PC-9 (cell line): ENCODE measurements at regions of chr16 and their contacts with region 1.

Region 1: DNA sequence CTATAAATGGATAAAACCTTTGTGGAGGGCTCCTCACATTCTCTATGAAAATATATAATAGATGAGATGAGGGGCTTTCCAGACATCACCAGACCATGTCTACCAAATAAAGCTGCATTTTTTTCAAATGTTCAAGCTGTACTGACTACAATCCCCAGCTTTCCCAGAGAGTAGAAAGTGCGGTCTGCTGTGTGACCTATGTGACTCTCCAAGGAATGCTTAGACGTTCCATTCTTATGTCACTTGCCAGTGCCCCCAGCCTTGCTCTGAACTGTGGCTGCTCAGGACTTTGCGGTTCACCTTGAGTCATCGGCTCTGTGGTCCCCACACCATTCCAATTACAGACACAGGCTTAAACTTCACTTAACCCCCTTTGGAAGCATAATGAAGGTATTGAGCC is 47.8 kb upstream of the SCNN1B start:
- DNase-seq: peak; percentile 83 to 93
- H3K4me3 ChIP-seq: no peak overlapping the region
- H3K27ac ChIP-seq: peak overlapping the region; percentile 63
- H3K4me1 ChIP-seq: peaks cover 56% of the 10 kb centered on the region
- H3K27me3 ChIP-seq: no peaks in the 10 kb centered on the region
- CTCF ChIP-seq: no peak

Region 2: GRCh38 chr16:23182460-23183309 is 71.7 kb before region 1 on chr16 and contains the start of gene SCNN1G:
- CTCF ChIA-PET with region 1: interaction called, 3 read pairs
- POLR2A ChIA-PET with region 1: no interaction called
- intact Hi-C with region 1: loop called (anchors 1 kb)
- DNase-seq: peak; percentile 75 to 99
- H3K4me3 ChIP-seq: peak within 1 kb of the TSS; percentile 81
- H3K27ac ChIP-seq: no peak within 1 kb of the TSS
- H3K4me1 ChIP-seq: peaks cover 27% of the 10 kb centered on the region
- H3K27me3 ChIP-seq: no peaks in the 10 kb centered on the region
- CTCF ChIP-seq: peak; percentile 85
- total RNA-seq, gene SCNN1G: not detected in 2 replicates

Region 3: DNA sequence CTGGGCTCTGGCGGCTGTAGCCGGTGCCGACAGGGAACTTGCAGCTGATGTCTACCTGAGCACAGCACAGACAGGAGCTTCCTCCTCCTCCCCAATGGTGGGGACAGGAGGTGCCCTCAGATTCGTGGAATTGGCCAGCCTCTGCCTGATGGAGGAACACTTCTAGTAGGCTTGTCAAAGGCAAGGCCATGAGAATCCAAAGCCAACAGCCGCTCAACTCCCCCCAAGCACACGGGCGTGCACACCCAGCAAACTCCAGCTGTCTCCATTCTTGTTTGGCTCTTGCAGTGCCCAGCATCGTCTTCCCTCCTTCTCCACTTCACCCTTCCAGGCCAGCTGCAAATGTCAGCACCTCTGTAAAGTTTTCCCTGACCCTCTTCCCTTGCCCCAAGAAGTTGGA is 36.7 kb before region 1 on chr16:
- CTCF ChIA-PET with region 1: no interaction called
- POLR2A ChIA-PET with region 1: no interaction called
- intact Hi-C with region 1: no loop called
- DNase-seq: no peak
- H3K4me3 ChIP-seq: no peak overlapping the region
- H3K27ac ChIP-seq: no peak overlapping the region
- H3K4me1 ChIP-seq: no peaks in the 10 kb centered on the region
- H3K27me3 ChIP-seq: no peaks in the 10 kb centered on the region
- CTCF ChIP-seq: no peak

Region 4: GRCh38 chr16:23229714-23230113 is 24.6 kb before region 1 on chr16:
- CTCF ChIA-PET with region 1: no interaction called
- POLR2A ChIA-PET with region 1: no interaction called
- intact Hi-C with region 1: loop called (anchors 2 kb)
- DNase-seq: peak; percentile 73 to 95
- H3K4me3 ChIP-seq: no peak overlapping the region
- H3K27ac ChIP-seq: peak overlapping the region; percentile 50
- H3K4me1 ChIP-seq: peaks cover 29% of the 10 kb centered on the region
- H3K27me3 ChIP-seq: no peaks in the 10 kb centered on the region
- CTCF ChIP-seq: no peak

Region 5: DNA sequence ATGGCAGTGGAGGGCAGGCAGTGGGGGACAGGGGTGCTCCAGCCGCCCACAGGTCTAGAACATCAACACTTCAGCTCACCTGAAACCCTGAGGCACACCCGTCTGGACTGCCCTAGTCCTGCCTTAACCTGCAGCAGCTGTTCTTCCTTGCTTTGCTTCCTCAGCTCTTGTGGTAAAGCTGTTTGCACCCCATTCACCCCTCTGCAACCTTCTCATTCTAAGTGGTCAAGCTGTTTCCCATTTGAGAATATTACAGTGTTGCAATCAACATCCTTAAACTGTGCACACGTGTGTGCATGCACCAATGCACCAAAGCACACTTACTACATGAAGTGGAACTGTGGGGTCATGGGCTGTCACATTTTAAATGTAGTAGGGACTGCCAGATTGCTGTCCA is 80.1 kb after region 1 on chr16:
- CTCF ChIA-PET with region 1: no interaction called
- POLR2A ChIA-PET with region 1: interaction called, 17 read pairs
- intact Hi-C with region 1: loop called (anchors 10 kb)
- DNase-seq: no peak
- H3K4me3 ChIP-seq: no peak overlapping the region
- H3K27ac ChIP-seq: peak overlapping the region; percentile 16; the same call in 1 of the 2 replicates
- H3K4me1 ChIP-seq: peaks cover 46% of the 10 kb centered on the region
- H3K27me3 ChIP-seq: no peaks in the 10 kb centered on the region
- CTCF ChIP-seq: no peak

Region 6: GRCh38 chr16:23362460-23363317 is 108.4 kb after region 1 on chr16:
- CTCF ChIA-PET with region 1: no interaction called
- POLR2A ChIA-PET with region 1: no interaction called
- intact Hi-C with region 1: loop called (anchors 5 kb)
- DNase-seq: peak; percentile 89 to 93
- H3K4me3 ChIP-seq: no peak overlapping the region
- H3K27ac ChIP-seq: peak overlapping the region; percentile 74
- H3K4me1 ChIP-seq: peaks cover 62% of the 10 kb centered on the region
- H3K27me3 ChIP-seq: no peaks in the 10 kb centered on the region
- CTCF ChIP-seq: no peak

Region 7: DNA sequence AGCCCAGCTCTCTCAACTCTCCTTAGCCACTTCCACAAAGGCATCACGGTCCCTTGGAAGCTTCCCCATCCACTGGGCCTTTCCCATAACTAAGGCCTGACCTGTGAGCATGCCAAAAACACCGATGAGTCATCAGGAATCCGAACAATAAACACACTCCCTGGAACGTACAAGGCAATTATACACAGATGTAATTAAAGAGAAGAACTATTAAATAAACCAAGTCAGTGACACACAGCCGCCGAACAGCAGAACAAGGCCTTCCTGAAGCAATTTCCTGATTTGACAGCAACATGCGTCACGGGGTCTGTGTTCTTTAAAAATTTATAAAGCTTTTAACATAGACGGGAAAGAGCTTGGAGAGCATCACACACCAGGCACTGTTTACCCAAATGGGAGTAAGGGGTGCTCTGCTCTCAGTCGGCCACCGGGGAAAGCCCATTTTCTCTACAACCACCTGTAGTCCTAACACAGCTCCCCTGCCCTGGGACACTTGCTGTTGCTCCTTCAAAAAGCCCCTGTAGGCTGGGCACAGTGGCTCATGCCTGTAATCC is 169.2 kb after region 1 on chr16:
- CTCF ChIA-PET with region 1: no interaction called
- POLR2A ChIA-PET with region 1: no interaction called
- intact Hi-C with region 1: loop called (anchors 5 kb)
- DNase-seq: peak; percentile 62 to 88
- H3K4me3 ChIP-seq: no peak overlapping the region
- H3K27ac ChIP-seq: peak overlapping the region; percentile 48
- H3K4me1 ChIP-seq: peaks cover 18% of the 10 kb centered on the region
- H3K27me3 ChIP-seq: no peaks in the 10 kb centered on the region
- CTCF ChIP-seq: no peak

Region 8: GRCh38 chr16:23974223-23974622 is 719.9 kb after region 1 on chr16:
- CTCF ChIA-PET with region 1: no interaction called
- POLR2A ChIA-PET with region 1: no interaction called
- intact Hi-C with region 1: no loop called
- DNase-seq: no peak
- H3K4me3 ChIP-seq: no peak overlapping the region
- H3K27ac ChIP-seq: no peak overlapping the region
- H3K4me1 ChIP-seq: no peaks in the 10 kb centered on the region
- H3K27me3 ChIP-seq: peaks cover 30% of the 10 kb centered on the region
- CTCF ChIP-seq: no peak